Esophagus muscularis mucosa (tissue), 4 donors: ENCODE measurements at regions of chr6 and their contacts with region 1.

Region 1: GRCh38 chr6:10395171-10395941 is 19.5 kb downstream of the TFAP2A start:
- DNase-seq: no peak
- H3K4me3 ChIP-seq: no peak overlapping the region
- H3K27ac ChIP-seq: no peak overlapping the region
- H3K4me1 ChIP-seq: peaks cover 0 to 10% (median under 1%) of the 10 kb centered on the region in 4 donors
- H3K27me3 ChIP-seq: peaks cover 0 to 100% (median 64%) of the 10 kb centered on the region in 4 donors
- CTCF ChIP-seq: no peak
- EP300 ChIP-seq: no peak
- POLR2A ChIP-seq: no peak

Region 2: DNA sequence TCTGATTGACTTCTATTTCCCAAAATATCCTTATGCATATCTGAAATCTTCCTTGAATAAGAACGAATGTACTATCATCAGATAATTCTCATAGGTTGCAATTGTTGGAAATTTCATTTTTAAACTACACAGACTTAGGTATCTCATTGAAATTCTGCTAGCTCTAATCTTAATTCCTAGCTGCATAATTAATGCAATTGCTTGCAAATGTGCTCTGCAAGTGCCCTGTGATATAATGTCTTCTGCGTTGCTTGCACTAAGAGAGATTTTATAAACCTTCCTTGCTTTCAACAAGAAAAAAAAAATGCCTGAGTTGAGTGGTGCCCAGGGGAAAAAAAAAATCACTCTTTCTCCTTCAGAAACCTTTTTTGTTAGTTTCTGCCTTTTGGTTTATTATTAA is 335.4 kb before region 1 on chr6:
- intact Hi-C with region 1: no loop called
- DNase-seq: no peak
- H3K4me3 ChIP-seq: no peak overlapping the region
- H3K27ac ChIP-seq: no peak overlapping the region
- H3K4me1 ChIP-seq: no peaks in the 10 kb centered on the region
- H3K27me3 ChIP-seq: peaks cover 0 to 10% (median 0%) of the 10 kb centered on the region in 4 donors
- CTCF ChIP-seq: no peak
- EP300 ChIP-seq: no peak
- POLR2A ChIP-seq: no peak

Region 3: GRCh38 chr6:10316327-10316726 is 79.0 kb before region 1 on chr6:
- intact Hi-C with region 1: loop called (anchors 10 kb)
- DNase-seq: no peak
- H3K4me3 ChIP-seq: peak overlapping the region; percentile 2 to 18 (median 12)
- H3K27ac ChIP-seq: peak overlapping the region; percentile 66 to 81 (median 73)
- H3K4me1 ChIP-seq: peaks cover 0 to 27% (median 18%) of the 10 kb centered on the region in 4 donors
- H3K27me3 ChIP-seq: no peaks in the 10 kb centered on the region
- CTCF ChIP-seq: no peak
- EP300 ChIP-seq: no peak
- POLR2A ChIP-seq: no peak

Region 4: GRCh38 chr6:11093589-11094410 is 698.4 kb after region 1 on chr6 and contains the start of gene SMIM13:
- intact Hi-C with region 1: no loop called
- DNase-seq: peak; percentile 99
- H3K4me3 ChIP-seq: peak within 1 kb of the TSS; percentile 90 to 100 (median 98)
- H3K27ac ChIP-seq: peak within 1 kb of the TSS; percentile 97 to 100 (median 99)
- H3K4me1 ChIP-seq: peaks cover 17 to 29% (median 26%) of the 10 kb centered on the region in 4 donors
- H3K27me3 ChIP-seq: no peaks in the 10 kb centered on the region
- CTCF ChIP-seq: peak; percentile 49 to 61 (median 53)
- EP300 ChIP-seq: no peak
- POLR2A ChIP-seq: no peak
- total RNA-seq, gene SMIM13: 9.3 to 15.2 (median 12.0) TPM